Astrocyte of the cerebellum (primary cell): ENCODE measurements at regions of chr20 and their contacts with region 1.

Region 1: DNA sequence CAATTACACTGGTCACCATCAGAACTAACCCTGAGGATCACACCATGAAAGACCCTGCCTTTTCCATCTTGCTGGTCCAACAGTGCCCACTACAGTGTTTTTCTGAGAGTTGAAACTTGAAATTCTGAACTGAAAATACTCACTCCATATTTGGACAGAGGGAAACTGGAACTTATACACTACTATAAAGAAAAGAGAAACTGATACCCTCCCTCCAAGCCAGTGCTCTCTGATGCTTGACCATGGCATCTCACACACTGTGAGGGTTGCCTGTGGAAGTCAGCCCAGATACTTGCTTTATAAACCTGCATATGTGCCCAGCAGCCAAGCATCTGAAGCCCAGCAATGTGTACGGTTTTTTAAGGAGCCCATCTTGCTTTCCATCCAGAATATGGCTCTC is 108.7 kb downstream of the FOXA2 start:
- DNase-seq: no peak
- H3K4me3 ChIP-seq: no peak overlapping the region
- CTCF ChIP-seq: no peak

Region 2: DNA sequence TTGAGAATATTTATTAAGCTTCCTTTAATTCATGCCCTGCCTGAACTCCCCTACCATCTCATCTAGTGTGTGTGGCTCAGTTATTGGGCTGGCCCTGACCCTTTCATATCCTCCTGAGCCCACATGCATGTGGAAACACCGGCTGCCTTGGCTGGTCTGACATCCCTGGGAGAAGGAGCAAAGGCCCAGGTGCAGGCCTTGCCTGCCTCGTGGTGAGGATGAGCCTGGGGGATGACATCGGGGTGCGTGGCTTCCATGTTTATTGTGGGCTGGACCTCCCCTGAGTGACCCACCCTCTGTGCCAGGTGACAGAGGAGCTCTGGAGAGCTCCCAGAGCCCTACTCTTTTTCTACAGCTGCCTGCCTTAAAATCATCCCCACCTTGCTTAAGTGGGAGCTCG is 39.6 kb after region 1 on chr20:
- in situ Hi-C with region 1: loop called (anchors 5 kb)
- DNase-seq: no peak
- H3K4me3 ChIP-seq: no peak overlapping the region
- CTCF ChIP-seq: no peak

Region 3: GRCh38 chr20:22586645-22587310 is 111.1 kb after region 1 on chr20:
- in situ Hi-C with region 1: no loop called
- DNase-seq: no peak
- H3K4me3 ChIP-seq: no peak overlapping the region
- CTCF ChIP-seq: peak; percentile 24